ENCODE measurements at regions of chr7 and their contacts with region 1.

Region 1: GRCh38 chr7:150974468-150975391 is 3.4 kb downstream of the KCNH2 start:
- DNase-seq: no peak
- H3K4me3 ChIP-seq: peak overlapping the region in 2 of 3 experiments; percentile 39 to 48
- H3K27ac ChIP-seq: no peak overlapping the region
- H3K4me1 ChIP-seq: peaks cover 6% of the 10 kb centered on the region
- H3K27me3 ChIP-seq: peaks cover 15% of the 10 kb centered on the region
- CTCF ChIP-seq: peak in 1 of 2 donors; percentile 35

Region 2: GRCh38 chr7:150876817-150877526 is 97.8 kb before region 1 on chr7:
- CTCF ChIA-PET with region 1: no interaction called
- dilution Hi-C with region 1: loop called (anchors 5 kb)
- in situ Hi-C with region 1: no loop called
- intact Hi-C with region 1: no loop called
- DNase-seq: peak; percentile 69
- H3K4me3 ChIP-seq: no peak overlapping the region
- H3K27ac ChIP-seq: no peak overlapping the region
- H3K4me1 ChIP-seq: peaks cover 15% of the 10 kb centered on the region
- H3K27me3 ChIP-seq: no peaks in the 10 kb centered on the region
- CTCF ChIP-seq: peak; percentile 58 to 64

Region 3: DNA sequence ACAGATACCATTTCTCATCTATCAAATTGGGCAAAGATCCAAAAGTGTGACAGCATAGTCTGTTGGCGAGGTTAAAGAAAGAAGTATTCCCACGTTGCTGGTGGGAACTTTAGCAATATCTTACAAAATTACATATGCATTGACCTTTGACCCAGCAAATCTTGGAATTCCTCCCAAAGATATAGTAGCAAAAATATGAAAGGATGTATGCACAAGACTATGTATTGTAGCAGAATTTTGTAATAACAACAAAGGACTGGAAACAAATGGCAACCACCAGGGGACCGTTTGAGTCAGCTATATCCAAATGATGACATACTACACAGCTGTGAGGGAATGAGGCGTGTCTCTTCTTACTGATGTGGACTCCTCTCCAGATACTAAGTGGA is 46.8 kb before region 1 on chr7:
- CTCF ChIA-PET with region 1: no interaction called
- dilution Hi-C with region 1: loop called (anchors 5 kb)
- in situ Hi-C with region 1: no loop called
- intact Hi-C with region 1: no loop called
- DNase-seq: no peak
- H3K4me3 ChIP-seq: no peak overlapping the region
- H3K27ac ChIP-seq: no peak overlapping the region
- H3K4me1 ChIP-seq: no peaks in the 10 kb centered on the region
- H3K27me3 ChIP-seq: no peaks in the 10 kb centered on the region
- CTCF ChIP-seq: peak in 1 of 2 donors; percentile 43

Region 4: DNA sequence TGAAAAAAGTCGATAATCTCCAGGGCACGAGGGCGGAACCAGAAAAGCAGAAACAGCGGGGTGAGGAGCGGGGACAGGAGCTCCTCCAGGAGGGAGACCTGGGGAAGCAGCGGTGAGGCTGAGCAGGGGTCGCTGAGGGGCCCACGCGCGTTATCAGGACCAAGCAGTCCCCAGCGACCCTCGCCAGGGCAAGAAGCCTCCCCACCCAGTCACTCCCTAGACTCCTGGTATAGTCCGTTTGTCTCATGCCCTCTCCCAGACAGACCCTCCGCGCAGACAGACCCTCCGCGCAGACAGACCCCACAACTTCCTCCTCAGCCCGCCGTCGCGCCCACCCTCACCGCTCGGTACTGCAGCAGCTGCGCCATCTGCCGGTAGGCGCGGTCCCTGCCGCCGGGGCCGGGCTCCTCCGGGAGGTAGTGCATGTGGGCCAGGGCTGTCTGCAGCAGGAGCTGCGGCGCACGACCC is 43.3 kb after region 1 on chr7:
- CTCF ChIA-PET with region 1: no interaction called
- dilution Hi-C with region 1: loop called (anchors 5 kb)
- in situ Hi-C with region 1: no loop called
- intact Hi-C with region 1: no loop called
- DNase-seq: peak; percentile 25
- H3K4me3 ChIP-seq: peak overlapping the region in 1 of 3 experiments; percentile 38
- H3K27ac ChIP-seq: no peak overlapping the region
- H3K4me1 ChIP-seq: peaks cover 28% of the 10 kb centered on the region
- H3K27me3 ChIP-seq: peaks cover 4% of the 10 kb centered on the region
- CTCF ChIP-seq: peak; percentile 75 to 93

Region 5: GRCh38 chr7:151080522-151081169 is 105.9 kb after region 1 on chr7 and contains the start of gene FASTK:
- CTCF ChIA-PET with region 1: no interaction called
- dilution Hi-C with region 1: no loop called
- in situ Hi-C with region 1: no loop called
- intact Hi-C with region 1: no loop called
- DNase-seq: peak; percentile 90
- H3K4me3 ChIP-seq: peak within 1 kb of the TSS; percentile 71 to 94 (median 80)
- H3K27ac ChIP-seq: peak within 1 kb of the TSS; percentile 52
- H3K4me1 ChIP-seq: peaks cover 35% of the 10 kb centered on the region
- H3K27me3 ChIP-seq: no peaks in the 10 kb centered on the region
- CTCF ChIP-seq: no peak
- total RNA-seq, gene FASTK: 49.7 to 68.8 TPM

Measured in mammary epithelial cell (primary cell).